ENCODE measurements at regions of chr12 and their contacts with region 1.

Region 1: DNA sequence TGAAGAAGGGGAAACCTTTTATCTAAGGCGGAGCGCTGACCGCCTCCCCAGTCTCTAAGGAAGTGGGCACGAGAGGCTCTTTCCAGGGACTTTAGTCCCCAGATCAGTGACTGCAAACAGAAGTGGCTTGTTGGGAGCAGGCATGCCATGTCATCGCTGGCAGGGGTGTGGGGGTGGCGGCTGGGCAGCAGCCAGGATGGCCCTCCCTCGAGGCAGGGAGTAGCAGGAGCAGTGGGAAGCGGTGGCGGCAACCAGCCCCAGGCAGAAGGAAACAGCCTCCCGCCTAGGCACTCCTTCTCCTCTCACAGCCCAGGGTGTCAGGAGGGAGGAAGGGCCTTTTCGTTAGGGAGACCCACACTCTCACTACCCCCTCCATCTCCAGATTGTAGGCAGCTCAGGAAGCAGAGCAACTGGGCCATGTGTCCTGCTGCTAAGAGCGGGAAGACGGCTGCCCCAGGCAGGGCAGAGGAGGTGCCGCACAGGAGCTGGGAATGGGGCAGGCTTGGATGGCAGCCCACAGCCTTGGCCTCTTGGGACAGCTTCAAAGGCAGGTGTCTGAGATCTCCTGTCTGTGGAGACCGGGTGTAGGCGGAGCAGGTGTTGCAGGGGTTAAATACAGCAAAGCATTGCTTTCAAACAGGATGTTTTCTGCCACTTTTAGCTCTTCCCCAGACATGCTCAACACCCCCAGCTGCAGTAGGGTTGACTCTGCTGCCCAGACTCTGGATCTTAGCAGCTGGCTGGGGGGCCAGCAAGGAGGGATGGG is 21.8 kb downstream of the VDR start:
- DNase-seq: peak; percentile 67
- H3K4me3 Mint-ChIP-seq: peak overlapping the region; percentile 89
- H3K27ac Mint-ChIP-seq: peak overlapping the region; percentile 97
- H3K4me1 Mint-ChIP-seq: peaks cover 88% of the 10 kb centered on the region
- H3K27me3 Mint-ChIP-seq: no peaks in the 10 kb centered on the region

Region 2: GRCh38 chr12:47828608-47829536 is 54.1 kb before region 1 on chr12:
- CTCF ChIA-PET with region 1: interaction called, 12 read pairs
- POLR2A ChIA-PET with region 1: interaction called, 13 read pairs
- intact Hi-C with region 1: loop called (anchors 1 kb)
- DNase-seq: peak; percentile 55
- H3K4me3 Mint-ChIP-seq: peak overlapping the region; percentile 60
- H3K27ac Mint-ChIP-seq: peak overlapping the region; percentile 81
- H3K4me1 Mint-ChIP-seq: peaks cover 89% of the 10 kb centered on the region
- H3K27me3 Mint-ChIP-seq: no peaks in the 10 kb centered on the region

Region 3: DNA sequence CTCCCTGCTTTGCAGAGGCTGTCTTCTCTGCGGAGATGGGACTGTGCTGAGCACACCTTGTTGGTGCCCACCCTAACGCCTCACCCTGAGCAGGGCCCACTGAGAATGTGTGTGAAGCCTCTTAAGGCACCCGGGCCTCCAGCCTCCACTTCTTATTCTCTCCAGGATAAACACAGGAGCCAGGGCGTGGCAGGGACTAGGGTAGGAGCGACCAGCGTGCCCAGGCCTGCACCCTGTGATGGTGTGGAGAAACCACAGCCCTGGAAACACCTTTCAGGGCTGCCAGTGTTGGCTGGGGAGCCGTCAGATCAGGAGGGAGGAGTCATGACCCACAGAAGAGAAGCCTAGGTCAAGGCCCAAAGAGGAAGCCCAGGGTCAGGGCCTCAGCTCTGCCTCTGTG is 19.5 kb before region 1 on chr12:
- CTCF ChIA-PET with region 1: interaction called, 30 read pairs
- POLR2A ChIA-PET with region 1: interaction called, 76 read pairs
- intact Hi-C with region 1: loop called (anchors 1 kb)
- DNase-seq: no peak
- H3K4me3 Mint-ChIP-seq: no peak overlapping the region
- H3K27ac Mint-ChIP-seq: peak overlapping the region; percentile 54
- H3K4me1 Mint-ChIP-seq: peaks cover 86% of the 10 kb centered on the region
- H3K27me3 Mint-ChIP-seq: no peaks in the 10 kb centered on the region

Region 4: DNA sequence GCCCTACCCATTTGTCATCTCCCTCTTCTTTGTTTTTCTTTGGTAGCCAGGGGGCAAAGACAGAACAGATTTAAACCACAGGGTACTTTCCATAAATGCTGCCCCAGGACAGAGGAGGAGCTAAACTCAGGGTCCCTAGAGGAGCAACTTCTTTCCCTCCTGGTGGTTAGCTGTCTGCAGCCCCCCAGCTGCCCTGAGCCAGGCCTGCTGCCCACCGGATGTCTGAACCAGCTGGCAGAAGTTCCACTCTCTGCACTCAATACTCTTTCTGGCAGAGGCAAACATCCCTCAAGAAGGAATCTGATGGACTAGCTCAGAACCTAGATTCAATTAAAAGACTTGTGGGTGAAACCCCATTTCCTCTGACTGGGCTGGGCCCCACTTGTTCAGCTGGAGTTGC is 11.1 kb after region 1 on chr12:
- CTCF ChIA-PET with region 1: interaction called, 6 read pairs
- POLR2A ChIA-PET with region 1: interaction called, 12 read pairs
- intact Hi-C with region 1: no loop called
- DNase-seq: no peak
- H3K4me3 Mint-ChIP-seq: no peak overlapping the region
- H3K27ac Mint-ChIP-seq: no peak overlapping the region
- H3K4me1 Mint-ChIP-seq: peaks cover 65% of the 10 kb centered on the region
- H3K27me3 Mint-ChIP-seq: no peaks in the 10 kb centered on the region